Activated CD4-positive, alpha-beta memory T cell treated with anti-CD3 and anti-CD28 coated beads, Interleukin-2, amount 10 ng/mL, durations not matched to agents 7 days and 5 days (primary cell): ENCODE measurements at regions of chr19 and their contacts with region 1.

Region 1: GRCh38 chr19:46753420-46754155 is 7.3 kb upstream of the STRN4 start:
- DNase-seq: peak; percentile 79
- H3K4me3 Mint-ChIP-seq: no peak overlapping the region
- H3K27ac Mint-ChIP-seq: no peak overlapping the region
- H3K4me1 Mint-ChIP-seq: peaks cover 20% of the 10 kb centered on the region
- H3K27me3 Mint-ChIP-seq: no peaks in the 10 kb centered on the region

Region 2: GRCh38 chr19:46529622-46530462 is 223.7 kb before region 1 on chr19:
- CTCF ChIA-PET with region 1: interaction called, 12 read pairs
- POLR2A ChIA-PET with region 1: interaction called, 3 read pairs
- DNase-seq: peak; percentile 75
- H3K4me3 Mint-ChIP-seq: no peak overlapping the region
- H3K27ac Mint-ChIP-seq: peak overlapping the region; percentile 8
- H3K4me1 Mint-ChIP-seq: peaks cover 17% of the 10 kb centered on the region
- H3K27me3 Mint-ChIP-seq: no peaks in the 10 kb centered on the region

Region 3: DNA sequence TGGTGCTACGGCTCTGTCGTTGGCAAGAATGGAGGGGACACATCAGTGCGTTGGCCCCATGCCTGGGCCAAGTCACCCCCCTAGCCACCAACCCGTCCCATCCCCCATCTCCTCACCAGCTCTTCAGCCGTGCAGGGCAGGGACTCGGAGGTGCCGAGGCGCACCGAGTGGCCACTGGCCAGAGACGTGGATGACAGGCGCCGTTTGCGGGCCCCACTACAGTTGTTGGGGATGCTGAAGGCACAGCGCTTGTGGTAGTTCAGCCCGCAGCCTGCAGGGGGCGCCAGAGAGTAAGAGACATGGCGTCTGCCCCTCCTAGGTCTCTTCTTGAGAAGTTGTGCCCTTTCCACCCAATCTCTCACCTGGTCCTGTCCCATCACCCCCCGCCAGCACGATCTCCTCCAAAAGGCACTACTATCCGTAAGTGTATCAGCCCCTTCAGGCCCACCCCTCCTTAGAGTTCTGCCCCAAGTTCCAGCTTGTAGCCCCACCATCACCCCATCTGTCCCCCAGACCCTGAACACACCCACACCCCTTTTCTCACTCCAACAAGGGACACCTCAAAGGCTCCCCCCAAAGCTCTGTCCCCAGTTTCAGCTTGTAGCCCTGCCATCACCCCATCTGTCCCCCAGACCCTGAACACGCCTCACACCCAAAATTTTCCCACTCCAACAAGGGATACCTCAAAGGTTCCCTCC is 49.1 kb before region 1 on chr19:
- CTCF ChIA-PET with region 1: interaction called, 10 read pairs
- POLR2A ChIA-PET with region 1: no interaction called
- DNase-seq: peak; percentile 87
- H3K4me3 Mint-ChIP-seq: no peak overlapping the region
- H3K27ac Mint-ChIP-seq: peak overlapping the region; percentile 59
- H3K4me1 Mint-ChIP-seq: peaks cover 17% of the 10 kb centered on the region
- H3K27me3 Mint-ChIP-seq: no peaks in the 10 kb centered on the region

Region 4: GRCh38 chr19:46721645-46722371 is 31.8 kb before region 1 on chr19:
- CTCF ChIA-PET with region 1: no interaction called
- POLR2A ChIA-PET with region 1: no interaction called
- DNase-seq: no peak
- H3K4me3 Mint-ChIP-seq: no peak overlapping the region
- H3K27ac Mint-ChIP-seq: no peak overlapping the region
- H3K4me1 Mint-ChIP-seq: peaks cover 39% of the 10 kb centered on the region
- H3K27me3 Mint-ChIP-seq: no peaks in the 10 kb centered on the region

Region 5: GRCh38 chr19:46766569-46767317 is 13.2 kb after region 1 on chr19:
- CTCF ChIA-PET with region 1: interaction called, 90 read pairs
- POLR2A ChIA-PET with region 1: interaction called, 4 read pairs
- DNase-seq: peak; percentile 73
- H3K4me3 Mint-ChIP-seq: no peak overlapping the region
- H3K27ac Mint-ChIP-seq: no peak overlapping the region
- H3K4me1 Mint-ChIP-seq: peaks cover 4% of the 10 kb centered on the region
- H3K27me3 Mint-ChIP-seq: no peaks in the 10 kb centered on the region

Region 6: DNA sequence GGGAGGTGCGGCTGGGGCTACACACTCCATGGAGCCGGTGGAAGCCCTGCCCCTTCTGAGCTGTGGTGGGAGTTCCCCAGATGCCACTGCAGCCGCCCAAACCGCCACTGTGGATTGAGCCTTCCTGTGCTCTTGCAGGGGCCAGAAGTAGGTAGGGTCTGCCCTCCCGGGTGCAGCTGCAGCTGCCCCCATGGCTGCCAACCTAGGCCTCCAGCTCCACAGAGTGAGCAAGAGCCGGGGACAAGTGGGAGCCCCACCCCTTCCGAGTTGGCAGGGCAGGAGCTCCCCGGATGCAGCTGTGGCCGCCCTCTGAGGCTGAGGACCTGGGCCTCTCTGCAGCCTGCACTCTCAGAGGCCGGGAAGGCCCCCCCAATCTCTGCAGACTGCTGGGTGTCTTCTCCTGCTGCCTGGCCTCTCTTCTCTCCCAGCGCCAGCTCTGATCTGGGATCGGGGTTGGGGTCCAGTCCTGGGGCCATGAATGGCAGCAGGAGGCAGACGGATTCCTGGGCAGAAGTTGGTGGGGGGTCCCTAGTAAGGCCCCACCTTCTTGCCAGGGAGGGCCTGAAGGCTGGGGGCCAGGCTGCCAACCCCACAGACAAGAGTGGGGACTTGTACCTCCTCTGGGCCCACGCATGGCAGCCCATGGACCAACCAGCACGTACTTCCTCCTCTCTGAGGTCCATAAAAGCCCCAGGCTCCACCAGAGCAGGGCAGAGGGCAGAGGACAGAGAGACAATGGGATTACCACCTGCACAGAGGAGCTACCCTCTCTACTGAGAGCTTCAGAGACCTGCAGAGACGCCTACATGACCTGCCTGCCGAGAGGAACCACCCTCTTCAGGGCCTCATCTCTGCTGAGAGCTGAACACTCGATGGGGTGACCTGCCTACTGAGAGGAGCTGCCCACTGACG is 68.2 kb after region 1 on chr19:
- CTCF ChIA-PET with region 1: interaction called, 17 read pairs
- POLR2A ChIA-PET with region 1: interaction called, 3 read pairs
- DNase-seq: peak; percentile 78
- H3K4me3 Mint-ChIP-seq: no peak overlapping the region
- H3K27ac Mint-ChIP-seq: peak overlapping the region; percentile 85
- H3K4me1 Mint-ChIP-seq: peaks cover 50% of the 10 kb centered on the region
- H3K27me3 Mint-ChIP-seq: no peaks in the 10 kb centered on the region

Region 7: DNA sequence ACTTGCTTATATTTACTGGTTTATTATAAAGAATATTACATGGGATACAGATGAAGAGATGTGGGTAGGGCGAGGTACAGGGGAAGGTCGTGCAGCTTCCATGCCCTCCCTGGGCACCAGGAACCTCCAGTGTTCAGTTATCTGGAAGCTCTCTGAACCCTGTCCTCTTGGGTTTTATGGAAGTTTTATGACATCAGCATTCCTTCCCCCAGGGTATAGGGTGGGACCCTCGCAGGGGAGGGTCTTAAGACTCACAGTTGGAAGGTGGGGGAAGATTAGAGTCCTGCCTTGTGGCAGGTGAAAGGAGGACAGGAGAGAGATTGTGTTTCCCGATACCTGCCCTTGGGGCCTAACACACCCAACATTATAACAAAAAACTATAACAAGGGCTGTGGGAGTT is 194.3 kb after region 1 on chr19:
- CTCF ChIA-PET with region 1: no interaction called
- POLR2A ChIA-PET with region 1: no interaction called
- DNase-seq: no peak
- H3K4me3 Mint-ChIP-seq: no peak overlapping the region
- H3K27ac Mint-ChIP-seq: no peak overlapping the region
- H3K4me1 Mint-ChIP-seq: peaks cover 52% of the 10 kb centered on the region
- H3K27me3 Mint-ChIP-seq: no peaks in the 10 kb centered on the region

Region 8: DNA sequence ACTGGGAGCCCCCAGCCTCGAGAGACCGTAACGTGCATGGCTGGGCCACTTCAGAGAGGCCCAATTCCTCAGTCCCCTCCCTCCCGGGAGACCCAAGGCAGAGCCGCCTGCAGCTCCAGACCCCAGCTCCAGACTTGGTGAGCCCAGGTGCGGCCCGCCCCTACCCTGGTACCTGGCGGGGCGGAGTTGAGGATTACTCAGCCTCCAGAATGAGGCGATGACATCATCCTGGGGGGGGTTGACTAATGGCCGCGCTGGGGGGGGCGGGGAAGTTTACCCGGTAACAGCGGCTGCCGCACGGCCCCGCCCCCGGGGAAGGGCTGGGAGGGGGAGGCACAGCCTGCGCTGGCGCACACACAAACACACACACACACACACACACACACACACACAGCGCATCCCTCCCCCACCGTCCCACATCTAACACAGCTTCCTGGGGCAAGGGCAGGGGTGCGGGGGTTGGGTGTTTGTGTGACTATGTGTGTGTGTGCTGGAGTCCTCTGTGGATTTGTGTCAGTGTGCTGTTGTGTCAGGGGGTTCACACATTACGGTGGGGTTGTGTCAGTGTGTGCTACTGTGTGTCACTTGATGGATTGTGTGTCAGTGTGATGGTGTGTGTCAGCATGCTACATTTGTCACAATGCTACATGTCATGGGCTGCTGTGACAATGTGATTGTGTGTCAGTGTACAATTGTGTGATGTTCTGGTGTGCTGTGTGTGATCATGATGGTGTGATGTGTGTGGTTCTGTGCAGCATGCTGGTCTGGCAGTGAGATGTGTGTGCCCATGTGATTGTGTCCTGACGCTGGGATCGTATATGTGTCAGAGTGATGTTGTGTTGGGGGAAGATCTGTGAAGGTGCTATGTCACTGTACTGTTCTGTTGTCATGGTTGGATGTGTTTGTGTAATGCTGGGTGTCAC is 487.7 kb after region 1 on chr19:
- CTCF ChIA-PET with region 1: no interaction called
- POLR2A ChIA-PET with region 1: no interaction called
- DNase-seq: peak; percentile 86
- H3K4me3 Mint-ChIP-seq: no peak overlapping the region
- H3K27ac Mint-ChIP-seq: no peak overlapping the region
- H3K4me1 Mint-ChIP-seq: peaks cover 30% of the 10 kb centered on the region
- H3K27me3 Mint-ChIP-seq: peaks cover 11% of the 10 kb centered on the region